GM13977 (cell line): ENCODE measurements at regions of chr9 and their contacts with region 1.

Region 1: DNA sequence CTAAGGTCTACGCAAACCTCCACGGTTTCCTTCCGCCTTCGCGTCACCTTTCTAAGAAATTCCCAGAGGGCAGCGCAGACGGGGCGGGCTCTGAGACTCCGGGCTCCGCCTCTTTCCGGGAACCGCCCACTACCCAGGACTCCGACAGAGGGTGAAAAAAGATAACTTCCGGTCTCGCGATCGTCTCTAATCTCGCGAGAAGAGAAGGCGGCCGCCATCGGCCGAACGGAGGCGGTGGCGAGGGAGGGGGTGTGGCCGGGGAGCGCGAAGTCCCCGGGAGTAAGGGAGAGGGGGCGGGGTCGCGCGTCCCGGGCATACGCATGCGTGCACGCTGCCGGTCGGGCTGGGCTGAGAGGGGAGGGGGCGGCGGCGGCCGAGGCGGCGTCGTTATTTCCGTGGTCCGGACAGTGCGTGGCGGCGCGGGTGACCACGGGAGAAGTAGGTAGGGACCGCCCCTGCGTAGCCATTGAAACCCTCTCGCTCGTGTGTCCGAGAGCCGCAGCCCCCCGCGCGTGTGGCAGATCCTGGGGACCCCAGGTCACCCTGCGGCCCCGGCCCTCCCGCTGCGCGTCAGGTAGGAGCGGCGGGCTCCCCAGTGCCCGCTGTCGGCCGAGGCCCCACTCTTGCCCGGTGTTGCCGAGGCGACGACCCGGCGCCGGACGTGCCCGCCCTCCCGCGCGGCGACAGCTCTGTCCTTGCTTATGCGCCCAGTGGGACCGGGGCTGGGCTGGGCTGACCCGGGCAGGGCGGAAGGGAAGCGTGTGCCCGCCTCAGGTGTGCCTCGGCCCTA is at the start of gene NAA35:
- DNase-seq: peak; percentile 98
- CTCF ChIP-seq: no peak

Region 2: GRCh38 chr9:85676790-85677189 is 264.2 kb before region 1 on chr9:
- in situ Hi-C with region 1: loop called (anchors 25 kb)
- DNase-seq: no peak
- CTCF ChIP-seq: no peak